ENCODE measurements at regions of chr3 and their contacts with region 1.

Region 1: DNA sequence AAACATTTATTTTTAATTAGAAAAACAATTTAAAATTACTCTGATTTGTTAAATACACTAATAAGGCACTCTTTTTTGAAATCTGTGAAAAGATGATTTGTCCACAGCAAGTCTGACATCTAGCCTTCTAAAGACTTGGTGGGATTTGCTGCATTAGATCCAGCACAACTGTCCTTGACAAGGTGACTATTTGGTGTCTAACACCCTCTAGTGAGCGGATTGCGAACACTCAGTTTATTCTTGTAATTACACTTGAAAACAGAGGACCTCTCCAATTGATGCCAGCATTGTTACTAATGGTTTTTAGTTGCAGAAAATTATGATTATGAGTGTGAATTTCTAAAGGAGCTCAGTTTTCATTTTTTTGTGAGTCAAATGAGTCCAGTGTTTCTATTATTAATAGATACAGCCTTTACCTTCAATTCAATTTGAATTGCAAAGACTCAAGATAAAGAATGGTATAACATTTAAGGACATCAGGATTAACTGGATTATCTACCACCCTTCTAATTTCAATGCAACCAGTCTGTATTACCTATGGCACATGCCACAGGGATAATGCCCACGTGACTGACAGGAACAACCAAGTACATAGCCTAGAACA is 29.7 kb upstream of the STRIT1 start:
- DNase-seq: peak; percentile 64
- H3K4me3 ChIP-seq: no peak overlapping the region
- H3K27ac ChIP-seq: no peak overlapping the region
- H3K27me3 ChIP-seq: peaks cover 4% of the 10 kb centered on the region
- CTCF ChIP-seq: peak; percentile 78

Region 2: DNA sequence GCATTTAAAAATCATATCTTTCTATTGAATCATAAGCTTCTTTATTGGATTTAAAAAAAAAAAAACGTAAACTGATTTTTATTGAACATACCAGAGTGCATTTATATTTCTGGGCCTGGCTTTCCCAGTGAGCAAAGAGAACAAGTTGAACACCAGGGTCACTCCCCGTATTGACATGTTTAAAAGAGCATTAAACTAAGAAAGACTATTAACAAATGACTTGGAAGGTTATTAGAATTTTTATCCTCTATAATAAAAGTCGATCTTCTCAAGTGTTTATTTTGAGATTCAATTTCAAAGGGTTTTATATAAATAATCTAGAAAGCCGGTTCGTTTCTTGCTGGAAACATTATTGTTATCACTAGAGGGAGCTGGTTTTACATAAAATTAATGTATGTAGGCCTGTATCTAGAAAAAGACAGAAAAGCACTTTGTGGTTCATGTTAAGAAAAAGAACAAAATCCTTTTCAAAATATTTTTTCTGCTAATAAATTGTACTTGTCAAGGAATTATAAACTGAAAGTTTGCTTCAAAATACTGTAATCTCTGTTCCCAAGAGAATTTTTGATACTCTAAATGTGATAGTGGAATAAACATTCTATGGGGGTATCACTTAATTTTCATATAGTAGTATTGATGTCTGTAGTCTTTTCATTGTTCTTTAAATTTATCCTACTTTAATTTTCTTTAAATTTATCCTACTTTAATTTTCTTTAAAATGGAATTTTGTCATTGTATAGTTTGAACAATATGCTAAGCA is 564.9 kb before region 1 on chr3:
- CTCF ChIA-PET with region 1: interaction called, 41 read pairs
- POLR2A ChIA-PET with region 1: no interaction called
- DNase-seq: no peak
- H3K4me3 ChIP-seq: no peak overlapping the region
- H3K27ac ChIP-seq: no peak overlapping the region
- H3K27me3 ChIP-seq: no peaks in the 10 kb centered on the region
- CTCF ChIP-seq: peak; percentile 63

Region 3: DNA sequence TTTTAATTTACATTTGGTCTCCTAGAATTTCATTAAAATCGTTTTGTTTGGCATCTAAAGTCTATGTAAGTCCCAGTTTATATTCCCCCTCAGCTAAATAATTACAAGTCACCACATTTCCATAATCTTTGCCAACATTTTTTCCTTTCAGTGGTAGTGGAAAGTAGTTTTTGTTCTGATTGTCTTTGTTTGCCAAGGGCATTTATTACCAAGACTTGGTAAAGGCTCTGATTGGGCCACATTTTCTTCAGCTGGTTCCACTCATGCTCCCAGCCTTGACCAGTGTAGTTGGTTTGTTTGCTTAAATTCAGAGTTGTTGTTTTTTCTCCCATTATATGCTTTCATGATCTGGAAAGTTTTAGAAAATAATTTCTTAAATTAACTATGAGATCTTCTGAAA is 396.4 kb before region 1 on chr3:
- CTCF ChIA-PET with region 1: interaction called, 13 read pairs
- POLR2A ChIA-PET with region 1: no interaction called
- DNase-seq: no peak
- H3K4me3 ChIP-seq: no peak overlapping the region
- H3K27ac ChIP-seq: no peak overlapping the region
- H3K27me3 ChIP-seq: no peaks in the 10 kb centered on the region
- CTCF ChIP-seq: no peak

Region 4: DNA sequence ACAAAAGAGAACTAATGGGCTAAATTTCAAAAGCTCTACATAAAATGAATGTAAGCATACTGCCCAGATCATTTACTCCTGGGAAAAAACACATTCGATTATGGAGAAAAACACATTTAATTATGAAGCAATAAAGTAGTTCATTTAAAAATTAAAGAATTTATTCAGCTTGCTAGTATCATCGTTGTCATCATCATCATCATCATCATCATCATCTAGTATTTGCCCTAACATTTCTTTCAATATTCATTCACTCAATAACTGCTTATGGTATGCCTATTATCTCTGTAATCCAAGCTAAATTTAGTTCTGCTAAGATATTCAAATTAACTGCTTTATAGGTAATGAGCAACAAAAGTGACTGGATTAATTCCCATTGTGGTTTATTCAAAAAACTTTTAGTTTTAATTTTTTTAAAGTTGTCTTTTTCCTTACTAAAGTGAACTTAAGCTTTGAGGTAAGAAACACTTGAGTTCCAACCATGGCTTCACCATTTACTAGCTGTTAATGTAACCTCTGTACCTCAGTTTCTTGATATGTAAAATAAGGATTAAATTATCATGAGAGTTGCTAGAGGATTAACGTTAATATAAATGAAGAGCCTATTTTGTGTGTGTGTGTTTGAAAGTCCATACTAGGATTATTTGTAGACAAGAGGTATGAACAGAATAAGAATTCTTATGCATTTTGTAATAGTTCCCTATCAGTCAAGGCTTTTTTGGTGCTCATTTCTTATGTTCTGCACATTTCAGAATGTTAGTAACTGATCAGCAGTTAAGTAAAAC is 149.6 kb before region 1 on chr3:
- CTCF ChIA-PET with region 1: interaction called, 11 read pairs
- POLR2A ChIA-PET with region 1: no interaction called
- DNase-seq: no peak
- H3K4me3 ChIP-seq: no peak overlapping the region
- H3K27ac ChIP-seq: no peak overlapping the region
- H3K27me3 ChIP-seq: no peaks in the 10 kb centered on the region
- CTCF ChIP-seq: no peak

Region 5: DNA sequence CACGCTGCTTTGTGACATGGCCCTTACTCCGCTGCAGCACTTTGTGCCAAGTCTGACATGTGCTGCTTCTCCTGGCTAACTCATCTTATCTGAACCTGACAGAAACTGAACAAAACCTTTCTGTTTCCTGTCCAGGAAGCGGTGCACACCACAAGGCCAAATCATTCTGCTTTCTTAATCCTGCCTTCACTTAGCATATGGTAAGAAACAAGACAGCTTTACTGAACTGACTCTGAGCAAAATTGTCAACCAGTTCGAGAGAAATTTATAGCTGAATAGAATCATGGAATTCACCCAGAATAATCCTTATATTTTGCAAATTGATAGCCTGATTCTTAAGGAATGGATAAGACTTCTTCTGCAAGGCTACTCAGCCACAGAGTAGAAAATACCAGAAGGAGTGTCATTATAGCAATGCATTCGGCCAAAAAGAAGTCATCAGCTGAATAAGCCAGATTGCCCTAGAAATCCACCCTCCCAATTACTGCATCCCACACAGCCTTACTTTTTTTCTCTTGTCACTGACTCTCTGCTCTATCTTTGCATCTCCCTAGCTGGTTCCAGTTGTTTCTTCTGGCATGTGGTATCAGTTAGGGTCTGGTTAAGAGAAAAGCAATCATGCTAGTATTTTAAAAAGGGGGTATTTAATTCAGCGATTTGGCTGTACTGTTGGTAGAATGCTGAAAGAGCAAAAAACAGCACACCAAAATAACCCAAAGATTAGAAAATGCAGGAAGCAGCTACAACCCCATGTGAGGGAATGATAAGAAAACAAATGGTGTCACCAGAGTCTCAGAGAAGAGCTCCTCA is 12.0 kb after region 1 on chr3:
- CTCF ChIA-PET with region 1: interaction called, 14 read pairs
- POLR2A ChIA-PET with region 1: no interaction called
- DNase-seq: no peak
- H3K4me3 ChIP-seq: no peak overlapping the region
- H3K27ac ChIP-seq: no peak overlapping the region
- H3K27me3 ChIP-seq: peaks cover 4% of the 10 kb centered on the region
- CTCF ChIP-seq: no peak

Region 6: DNA sequence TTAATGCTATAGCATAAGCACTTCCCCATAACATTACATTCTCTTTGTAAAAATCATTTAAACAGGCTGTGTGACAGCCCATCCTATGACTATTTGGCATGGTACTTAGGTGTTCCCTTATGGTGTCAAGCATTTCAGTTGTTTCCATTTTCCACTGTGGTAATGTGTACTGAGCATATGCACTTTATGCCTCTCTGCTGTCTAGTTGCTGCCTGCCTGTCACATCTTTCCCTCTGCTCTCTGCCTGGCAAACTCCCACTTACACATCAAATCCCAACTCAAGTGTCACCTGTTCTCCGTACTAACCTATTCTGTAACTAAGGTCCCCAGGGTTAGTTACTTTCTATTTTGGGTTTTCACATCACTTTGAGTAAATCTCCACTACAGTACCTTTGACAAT is 54.7 kb after region 1 on chr3:
- CTCF ChIA-PET with region 1: no interaction called
- POLR2A ChIA-PET with region 1: no interaction called
- DNase-seq: no peak
- H3K4me3 ChIP-seq: no peak overlapping the region
- H3K27ac ChIP-seq: no peak overlapping the region
- H3K27me3 ChIP-seq: no peaks in the 10 kb centered on the region
- CTCF ChIP-seq: no peak

Region 7: DNA sequence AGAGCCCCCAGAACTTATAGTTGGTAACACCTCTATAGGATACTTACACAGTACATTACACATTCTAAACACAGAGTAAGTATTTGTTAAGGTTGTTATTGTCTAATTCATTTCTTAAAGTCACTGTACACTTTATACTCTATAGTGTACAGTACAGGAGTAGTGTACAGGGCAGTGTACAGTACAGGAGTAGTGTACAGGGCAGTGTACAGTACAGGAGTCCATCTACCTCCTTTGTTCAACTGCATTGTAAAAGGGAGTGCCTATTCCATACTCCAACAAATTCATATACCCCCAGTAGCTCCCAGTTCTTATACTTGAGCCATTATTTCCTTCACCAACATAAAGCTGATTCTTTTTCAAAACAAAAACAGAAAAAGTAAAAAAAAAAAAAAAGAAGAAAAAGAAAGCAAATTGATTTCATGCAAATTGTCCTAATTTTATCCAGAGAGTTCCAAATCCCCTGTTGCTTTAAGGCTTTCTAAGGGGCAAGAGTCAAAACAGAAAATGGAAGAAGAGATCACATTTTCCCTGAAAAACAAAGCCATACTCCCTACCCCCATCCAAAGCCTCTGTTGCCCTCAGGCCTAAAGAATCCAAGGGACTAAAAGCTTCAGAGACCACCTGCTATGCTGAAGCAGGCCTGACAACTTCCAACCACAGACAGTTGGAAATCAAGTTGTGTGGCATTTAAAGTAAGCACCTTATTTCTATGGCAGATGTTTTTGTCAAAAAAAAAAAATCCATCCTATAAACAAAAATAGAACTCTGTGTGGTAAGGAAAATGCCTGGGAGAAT is 296.2 kb after region 1 on chr3:
- CTCF ChIA-PET with region 1: no interaction called
- POLR2A ChIA-PET with region 1: no interaction called
- DNase-seq: no peak
- H3K4me3 ChIP-seq: no peak overlapping the region
- H3K27ac ChIP-seq: no peak overlapping the region
- H3K27me3 ChIP-seq: no peaks in the 10 kb centered on the region
- CTCF ChIP-seq: no peak